ENCODE measurements at regions of chr2 and their contacts with region 1.

Region 1: DNA sequence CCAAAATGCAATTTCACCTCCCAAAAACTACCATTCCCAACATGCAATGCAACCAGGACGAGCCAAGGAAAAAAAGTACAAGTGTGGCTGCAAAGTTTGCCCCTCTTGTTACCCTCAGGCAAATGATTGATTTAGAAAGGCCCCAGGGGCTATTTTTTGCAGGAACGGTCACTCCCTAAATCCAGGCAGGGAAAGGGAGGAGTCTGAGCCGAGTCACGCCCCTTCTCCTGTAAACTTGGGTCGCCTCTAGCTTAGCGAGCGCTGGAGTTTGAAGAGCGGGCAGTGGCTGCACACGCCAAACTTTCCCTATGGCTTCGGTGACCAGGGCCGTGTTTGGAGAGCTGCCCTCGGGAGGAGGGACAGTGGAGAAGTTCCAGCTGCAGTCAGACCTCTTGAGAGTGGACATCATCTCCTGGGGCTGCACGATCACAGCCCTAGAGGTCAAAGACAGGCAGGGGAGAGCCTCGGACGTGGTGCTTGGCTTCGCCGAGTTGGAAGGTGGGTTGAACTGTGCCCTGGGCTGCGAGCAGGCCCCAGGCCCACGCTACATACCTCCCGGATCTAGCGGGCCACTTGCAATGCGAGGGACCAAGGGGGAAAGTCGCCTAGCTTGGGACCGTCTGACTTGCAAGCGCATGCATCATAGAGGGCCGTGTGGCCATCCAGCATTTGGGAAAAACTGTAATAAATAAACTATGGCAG is at the start of gene GALM:
- DNase-seq: peak; percentile 82
- H3K4me3 Mint-ChIP-seq: peak within 1 kb of the TSS; percentile 85
- H3K27ac Mint-ChIP-seq: peak within 1 kb of the TSS; percentile 97
- H3K4me1 Mint-ChIP-seq: peaks cover 68% of the 10 kb centered on the region
- H3K27me3 Mint-ChIP-seq: no peaks in the 10 kb centered on the region
- total RNA-seq, gene GALM: 90.2 to 95.3 TPM

Region 2: GRCh38 chr2:38485734-38486133 is 180.3 kb before region 1 on chr2:
- CTCF ChIA-PET with region 1: no interaction called
- POLR2A ChIA-PET with region 1: no interaction called
- intact Hi-C with region 1: no loop called
- DNase-seq: no peak
- H3K4me3 Mint-ChIP-seq: no peak overlapping the region
- H3K27ac Mint-ChIP-seq: no peak overlapping the region
- H3K4me1 Mint-ChIP-seq: no peaks in the 10 kb centered on the region
- H3K27me3 Mint-ChIP-seq: no peaks in the 10 kb centered on the region

Region 3: GRCh38 chr2:38581193-38582147 is 84.5 kb before region 1 on chr2:
- CTCF ChIA-PET with region 1: interaction called, 20 read pairs
- POLR2A ChIA-PET with region 1: interaction called, 5 read pairs
- intact Hi-C with region 1: no loop called
- DNase-seq: peak; percentile 43
- H3K4me3 Mint-ChIP-seq: no peak overlapping the region
- H3K27ac Mint-ChIP-seq: peak overlapping the region; percentile 52
- H3K4me1 Mint-ChIP-seq: peaks cover 60% of the 10 kb centered on the region
- H3K27me3 Mint-ChIP-seq: no peaks in the 10 kb centered on the region

Region 4: DNA sequence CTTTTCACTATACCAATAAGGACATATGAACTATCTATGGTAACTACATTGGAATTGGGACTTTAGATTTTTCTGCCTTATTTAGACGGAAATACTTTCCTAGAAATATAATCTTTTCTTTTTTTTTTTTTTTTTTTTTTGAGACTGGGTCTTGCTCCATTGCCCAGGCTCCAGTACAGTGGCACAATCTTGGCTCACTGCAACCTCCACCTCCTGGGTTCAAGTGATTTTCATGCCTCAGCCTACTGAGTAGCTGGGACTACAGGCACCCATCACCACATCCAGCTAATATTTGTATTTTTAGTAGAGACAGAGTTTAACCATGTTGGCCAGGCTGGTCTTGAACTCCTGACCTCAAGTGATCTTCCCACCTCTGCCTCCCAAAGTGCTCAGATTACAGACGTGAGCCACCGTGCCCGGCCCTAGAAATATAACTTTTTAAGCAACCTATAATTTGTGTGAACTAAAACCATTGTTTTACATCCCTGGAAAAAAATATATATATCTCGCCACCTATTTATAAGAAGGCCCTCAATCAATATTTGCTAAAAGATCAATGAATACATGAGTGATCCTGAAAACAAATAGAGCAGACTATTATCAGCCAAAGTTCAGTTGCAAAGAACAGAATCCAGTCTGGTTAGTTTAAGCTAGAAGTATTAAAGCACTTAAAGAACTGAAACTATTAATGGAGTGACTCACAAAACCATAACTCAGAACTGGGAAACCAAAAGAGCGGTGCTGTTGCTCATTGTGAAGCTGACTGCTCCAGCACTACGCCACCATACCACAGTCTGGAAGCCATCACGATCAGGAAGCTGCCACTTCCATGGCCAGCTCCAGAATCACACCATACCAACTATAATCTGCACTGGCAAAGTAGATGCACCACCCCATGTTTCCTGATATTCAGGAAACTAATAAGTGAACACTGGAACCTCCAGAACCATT is 54.9 kb before region 1 on chr2:
- CTCF ChIA-PET with region 1: interaction called, 85 read pairs
- POLR2A ChIA-PET with region 1: interaction called, 6 read pairs
- intact Hi-C with region 1: loop called (anchors 1 kb)
- DNase-seq: peak; percentile 57
- H3K4me3 Mint-ChIP-seq: peak overlapping the region; percentile 10
- H3K27ac Mint-ChIP-seq: peak overlapping the region; percentile 31
- H3K4me1 Mint-ChIP-seq: peaks cover 69% of the 10 kb centered on the region
- H3K27me3 Mint-ChIP-seq: no peaks in the 10 kb centered on the region

Region 5: GRCh38 chr2:38682008-38682575 is 16.1 kb after region 1 on chr2:
- CTCF ChIA-PET with region 1: interaction called, 23 read pairs
- POLR2A ChIA-PET with region 1: interaction called, 56 read pairs
- intact Hi-C with region 1: loop called (anchors 1 kb)
- DNase-seq: peak; percentile 38
- H3K4me3 Mint-ChIP-seq: peak overlapping the region; percentile 63
- H3K27ac Mint-ChIP-seq: peak overlapping the region; percentile 84
- H3K4me1 Mint-ChIP-seq: peaks cover 78% of the 10 kb centered on the region
- H3K27me3 Mint-ChIP-seq: no peaks in the 10 kb centered on the region

Region 6: DNA sequence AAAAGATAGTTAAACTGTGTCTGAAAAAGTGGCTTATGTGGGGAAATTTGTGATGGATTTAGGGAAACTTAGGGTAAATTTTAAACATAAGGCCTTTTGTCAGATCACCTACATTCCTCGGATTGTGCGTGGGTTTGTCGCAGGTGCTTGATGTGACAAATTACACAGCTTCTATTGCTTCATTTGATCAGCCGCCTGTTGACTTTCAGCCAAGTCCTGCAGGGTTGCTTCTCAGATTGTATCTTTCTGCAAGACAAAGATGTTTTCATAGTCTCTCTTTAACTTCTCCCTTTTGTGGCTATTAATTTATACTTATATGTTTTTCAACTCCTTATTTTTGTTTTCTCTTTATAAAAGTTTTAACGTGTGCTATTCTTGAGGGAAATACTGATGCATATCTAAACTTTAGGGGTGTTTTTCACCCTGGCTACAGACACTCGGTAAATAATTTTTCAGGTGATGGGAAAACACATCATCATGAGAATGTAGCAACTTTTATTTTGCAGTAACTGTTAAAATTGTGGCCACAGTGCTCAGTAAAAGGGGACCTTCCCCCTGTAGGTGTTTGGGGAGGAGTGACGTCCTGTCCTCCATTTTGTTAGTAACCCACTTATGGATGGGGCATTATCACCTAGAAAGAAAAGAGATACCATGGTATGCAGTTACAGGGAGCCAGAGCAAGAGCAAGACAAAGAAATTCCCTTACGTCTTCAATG is 31.3 kb after region 1 on chr2:
- CTCF ChIA-PET with region 1: interaction called, 5 read pairs
- POLR2A ChIA-PET with region 1: interaction called, 11 read pairs
- intact Hi-C with region 1: loop called (anchors 1 kb)
- DNase-seq: peak; percentile 71
- H3K4me3 Mint-ChIP-seq: peak overlapping the region; percentile 34
- H3K27ac Mint-ChIP-seq: peak overlapping the region; percentile 94
- H3K4me1 Mint-ChIP-seq: peaks cover 86% of the 10 kb centered on the region
- H3K27me3 Mint-ChIP-seq: no peaks in the 10 kb centered on the region

Region 7: DNA sequence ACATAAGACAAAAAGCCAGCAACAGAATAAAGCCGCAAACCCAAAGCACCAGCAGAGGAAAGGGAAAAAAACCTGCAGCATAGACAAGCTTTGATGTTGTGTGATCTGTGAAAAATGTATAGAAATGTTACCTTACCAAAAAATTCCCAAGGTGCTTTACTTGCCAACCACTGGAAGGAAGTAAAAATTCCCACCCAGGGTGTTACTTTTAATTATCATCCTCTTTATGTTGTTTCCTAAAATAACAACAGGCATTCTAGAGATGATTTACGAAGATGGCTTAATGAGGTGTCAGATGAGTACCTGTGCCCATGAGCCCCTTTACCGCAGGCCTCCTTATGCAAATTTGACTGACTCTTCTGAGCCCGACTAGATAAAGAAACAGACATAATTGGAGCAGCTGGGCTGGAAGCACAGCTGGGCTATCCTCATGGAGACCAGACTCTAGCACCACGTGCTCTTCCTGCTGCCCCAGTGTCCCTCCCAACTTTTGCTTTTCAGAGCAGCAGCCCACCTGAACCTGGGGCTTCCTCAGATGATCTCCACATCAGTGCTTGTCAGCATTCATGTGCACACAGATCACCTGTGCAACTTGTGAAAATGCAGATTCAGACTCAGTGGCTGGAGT is 43.7 kb after region 1 on chr2:
- CTCF ChIA-PET with region 1: no interaction called
- POLR2A ChIA-PET with region 1: interaction called, 6 read pairs
- intact Hi-C with region 1: loop called (anchors 1 kb)
- DNase-seq: peak; percentile 72
- H3K4me3 Mint-ChIP-seq: peak overlapping the region; percentile 52
- H3K27ac Mint-ChIP-seq: peak overlapping the region; percentile 90
- H3K4me1 Mint-ChIP-seq: peaks cover 74% of the 10 kb centered on the region
- H3K27me3 Mint-ChIP-seq: no peaks in the 10 kb centered on the region

Region 8: DNA sequence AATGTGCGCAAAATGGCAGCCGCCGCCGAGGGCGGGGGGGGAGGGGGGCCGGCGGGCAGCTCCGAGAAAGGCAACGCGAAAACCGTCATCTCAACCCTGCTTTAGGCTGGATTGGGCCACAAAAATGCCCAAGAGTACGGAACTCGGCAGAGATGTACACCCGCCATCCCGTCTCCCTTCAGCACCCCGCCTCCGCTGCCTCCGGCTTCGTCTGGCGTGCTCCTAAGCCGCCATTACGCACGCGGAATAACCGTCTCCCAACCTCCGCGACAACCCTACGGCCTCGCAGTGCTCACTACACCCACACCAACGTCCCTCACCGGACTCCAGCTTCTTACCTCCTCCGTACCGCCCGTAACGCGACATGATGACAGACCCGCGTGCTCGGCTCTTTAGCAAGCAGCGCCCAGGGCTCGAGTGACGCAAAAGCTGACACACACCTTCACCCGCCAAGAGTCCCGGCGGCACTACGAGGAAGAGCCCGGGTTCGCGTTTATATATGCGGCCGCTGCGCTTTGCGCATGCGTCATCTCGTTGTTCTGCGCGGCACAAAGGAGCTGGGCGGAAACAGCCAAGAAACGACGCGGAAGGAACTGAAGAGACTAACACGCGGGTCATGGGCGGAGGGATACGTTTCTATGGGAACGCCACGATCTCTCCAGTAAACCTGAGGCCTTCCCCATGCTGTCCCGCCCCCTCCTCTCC is 85.0 kb after region 1 on chr2 and contains the start of gene SRSF7:
- CTCF ChIA-PET with region 1: no interaction called
- POLR2A ChIA-PET with region 1: interaction called, 32 read pairs
- intact Hi-C with region 1: no loop called
- DNase-seq: peak; percentile 98
- H3K4me3 Mint-ChIP-seq: peak within 1 kb of the TSS; percentile 95
- H3K27ac Mint-ChIP-seq: peak within 1 kb of the TSS; percentile 100
- H3K4me1 Mint-ChIP-seq: peaks cover 53% of the 10 kb centered on the region
- H3K27me3 Mint-ChIP-seq: peaks cover 6% of the 10 kb centered on the region
- total RNA-seq, gene SRSF7: 276 to 279 TPM

Region 9: GRCh38 chr2:38850045-38850444 is 184.0 kb after region 1 on chr2:
- CTCF ChIA-PET with region 1: no interaction called
- POLR2A ChIA-PET with region 1: no interaction called
- intact Hi-C with region 1: no loop called
- DNase-seq: no peak
- H3K4me3 Mint-ChIP-seq: no peak overlapping the region
- H3K27ac Mint-ChIP-seq: no peak overlapping the region
- H3K4me1 Mint-ChIP-seq: no peaks in the 10 kb centered on the region
- H3K27me3 Mint-ChIP-seq: no peaks in the 10 kb centered on the region